B cell (primary cell): ENCODE measurements at regions of chrX and their contacts with region 1.

Region 1: GRCh38 chrX:80808160-80808735 is 1.4 kb downstream of the BRWD3 start:
- DNase-seq: peak; percentile 89
- ATAC-seq: peak; percentile 55
- H3K4me3 ChIP-seq: peak overlapping the region; percentile 75 to 89 (median 84)
- H3K4me3 Mint-ChIP-seq: peak overlapping the region; percentile 96
- H3K27ac ChIP-seq: peak overlapping the region; percentile 76 to 82
- H3K27ac Mint-ChIP-seq: peak overlapping the region; percentile 95
- H3K4me1 ChIP-seq: peaks cover 5 to 15% of the 10 kb centered on the region in 2 donors
- H3K4me1 Mint-ChIP-seq: peaks cover 25% of the 10 kb centered on the region
- H3K27me3 ChIP-seq: no peaks in the 10 kb centered on the region
- H3K27me3 Mint-ChIP-seq: no peaks in the 10 kb centered on the region
- CTCF ChIP-seq: no peak

Region 2: GRCh38 chrX:80766916-80767315 is 41.3 kb before region 1 on chrX:
- CTCF ChIA-PET with region 1: no interaction called
- POLR2A ChIA-PET with region 1: interaction called, 10 read pairs
- intact Hi-C with region 1: no loop called
- DNase-seq: no peak
- ATAC-seq: no peak
- H3K4me3 ChIP-seq: no peak overlapping the region
- H3K4me3 Mint-ChIP-seq: no peak overlapping the region
- H3K27ac ChIP-seq: no peak overlapping the region
- H3K27ac Mint-ChIP-seq: no peak overlapping the region
- H3K4me1 ChIP-seq: no peaks in the 10 kb centered on the region
- H3K4me1 Mint-ChIP-seq: peaks cover 43% of the 10 kb centered on the region
- H3K27me3 ChIP-seq: no peaks in the 10 kb centered on the region
- H3K27me3 Mint-ChIP-seq: no peaks in the 10 kb centered on the region
- CTCF ChIP-seq: no peak

Region 3: GRCh38 chrX:81121513-81122382 is 313.5 kb after region 1 on chrX:
- CTCF ChIA-PET with region 1: no interaction called
- POLR2A ChIA-PET with region 1: no interaction called
- intact Hi-C with region 1: loop called (anchors 2 kb)
- DNase-seq: peak; percentile 88
- ATAC-seq: peak; percentile 94
- H3K4me3 ChIP-seq: peak overlapping the region; percentile 55 to 68 (median 67)
- H3K4me3 Mint-ChIP-seq: peak overlapping the region; percentile 93
- H3K27ac ChIP-seq: peak overlapping the region in 1 of 2 donors; percentile 37
- H3K27ac Mint-ChIP-seq: peak overlapping the region; percentile 46
- H3K4me1 ChIP-seq: peaks cover 0 to 7% of the 10 kb centered on the region in 2 donors
- H3K4me1 Mint-ChIP-seq: peaks cover 17% of the 10 kb centered on the region
- H3K27me3 ChIP-seq: no peaks in the 10 kb centered on the region
- H3K27me3 Mint-ChIP-seq: no peaks in the 10 kb centered on the region
- CTCF ChIP-seq: no peak

Region 4: GRCh38 chrX:81201671-81202455 is 393.6 kb after region 1 on chrX and contains the starts of genes HMGN5 and SH3BGRL:
- CTCF ChIA-PET with region 1: no interaction called
- POLR2A ChIA-PET with region 1: interaction called, 5 read pairs
- intact Hi-C with region 1: loop called (anchors 2 kb)
- DNase-seq: peak; percentile 83
- ATAC-seq: peak; percentile 92
- H3K4me3 ChIP-seq: peak within 1 kb of the TSS; percentile 74 to 94 (median 85)
- H3K4me3 Mint-ChIP-seq: peak within 1 kb of the TSS; percentile 99
- H3K27ac ChIP-seq: peak within 1 kb of the TSS; percentile 85
- H3K27ac Mint-ChIP-seq: peak within 1 kb of the TSS; percentile 97
- H3K4me1 ChIP-seq: peaks cover 18 to 30% of the 10 kb centered on the region in 2 donors
- H3K4me1 Mint-ChIP-seq: peaks cover 52% of the 10 kb centered on the region
- H3K27me3 ChIP-seq: no peaks in the 10 kb centered on the region
- H3K27me3 Mint-ChIP-seq: no peaks in the 10 kb centered on the region
- CTCF ChIP-seq: no peak
- total RNA-seq, gene HMGN5: 0.37 and 0.46 TPM in 2 replicates
- total RNA-seq, gene SH3BGRL: 105 and 109 TPM in 2 replicates